Esophagus muscularis mucosa (tissue), 4 donors: ENCODE measurements at regions of chr11 and their contacts with region 1.

Region 1: DNA sequence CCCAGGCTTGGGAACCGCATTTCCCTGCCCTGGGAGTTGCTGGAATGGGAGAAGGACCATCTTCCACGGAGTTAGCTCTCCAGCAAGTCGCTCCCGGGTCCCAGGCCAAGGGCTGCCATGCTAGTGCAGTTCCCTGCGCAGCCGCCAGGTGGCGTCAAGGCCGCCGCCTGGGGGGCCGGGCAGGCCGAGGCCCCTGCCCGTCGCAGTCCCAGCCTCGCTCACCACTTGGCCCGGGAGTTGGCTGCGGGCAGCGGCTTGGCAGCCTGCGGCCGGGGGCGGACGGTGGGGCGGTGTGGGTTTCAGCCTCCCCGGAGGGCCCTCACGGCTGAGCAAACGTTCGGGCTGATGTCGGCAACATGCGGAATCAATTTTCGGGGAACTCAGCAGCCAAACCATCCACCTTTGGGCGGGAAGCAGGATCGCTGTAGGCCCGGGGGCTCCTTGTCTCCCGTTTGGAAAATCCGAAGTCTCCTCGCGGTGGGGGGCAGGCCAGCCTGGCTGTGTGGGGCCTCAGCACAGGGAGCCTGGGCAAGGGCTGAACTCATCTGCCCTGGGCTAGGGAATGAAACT is 415.1 kb downstream of the SOX6 start:
- DNase-seq: peak; percentile 55
- H3K4me3 ChIP-seq: no peak overlapping the region
- H3K27ac ChIP-seq: no peak overlapping the region
- H3K4me1 ChIP-seq: peaks cover 0 to 21% (median 12%) of the 10 kb centered on the region in 4 donors
- H3K27me3 ChIP-seq: no peaks in the 10 kb centered on the region
- CTCF ChIP-seq: peak; percentile 29 to 73 (median 59)
- EP300 ChIP-seq: no peak
- POLR2A ChIP-seq: no peak

Region 2: DNA sequence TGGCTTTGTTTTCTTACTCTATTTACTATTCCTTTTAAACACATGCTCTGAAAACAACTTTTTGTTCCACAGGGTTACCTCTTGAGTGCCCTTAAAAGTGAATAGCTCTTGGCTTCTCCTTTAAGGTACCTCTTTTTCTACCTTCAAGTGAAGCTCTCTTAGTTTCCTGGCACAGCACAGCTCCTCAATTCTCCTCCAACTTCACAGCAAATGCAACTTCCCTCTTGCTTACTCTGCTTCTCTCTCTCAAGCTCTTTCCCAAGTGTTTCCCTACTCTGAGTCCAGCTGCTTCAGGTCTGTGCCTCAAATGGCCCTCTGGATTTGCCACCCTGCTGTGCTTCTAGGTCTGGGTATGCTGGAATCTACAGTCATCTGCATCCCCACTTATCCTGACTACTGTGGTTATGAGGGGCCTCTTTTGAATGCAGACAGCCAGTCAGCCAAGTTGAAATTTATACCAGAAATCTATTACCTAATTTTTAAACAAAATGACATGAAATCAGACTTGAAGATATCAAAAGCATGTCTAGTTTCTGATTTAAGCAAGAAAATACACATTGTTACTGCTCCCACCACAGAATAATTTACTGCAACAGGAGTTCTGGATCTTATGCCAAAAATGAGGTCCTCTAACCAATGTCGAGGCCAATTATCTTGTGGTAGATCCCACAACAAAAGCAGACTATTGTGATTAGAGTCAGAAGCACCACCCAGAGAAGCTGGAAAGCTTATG is 44.0 kb after region 1 on chr11:
- intact Hi-C with region 1: no loop called
- DNase-seq: no peak
- H3K4me3 ChIP-seq: no peak overlapping the region
- H3K27ac ChIP-seq: no peak overlapping the region
- H3K4me1 ChIP-seq: peaks cover 9 to 15% (median 10%) of the 10 kb centered on the region in 4 donors
- H3K27me3 ChIP-seq: no peaks in the 10 kb centered on the region
- CTCF ChIP-seq: no peak
- EP300 ChIP-seq: no peak
- POLR2A ChIP-seq: no peak

Region 3: DNA sequence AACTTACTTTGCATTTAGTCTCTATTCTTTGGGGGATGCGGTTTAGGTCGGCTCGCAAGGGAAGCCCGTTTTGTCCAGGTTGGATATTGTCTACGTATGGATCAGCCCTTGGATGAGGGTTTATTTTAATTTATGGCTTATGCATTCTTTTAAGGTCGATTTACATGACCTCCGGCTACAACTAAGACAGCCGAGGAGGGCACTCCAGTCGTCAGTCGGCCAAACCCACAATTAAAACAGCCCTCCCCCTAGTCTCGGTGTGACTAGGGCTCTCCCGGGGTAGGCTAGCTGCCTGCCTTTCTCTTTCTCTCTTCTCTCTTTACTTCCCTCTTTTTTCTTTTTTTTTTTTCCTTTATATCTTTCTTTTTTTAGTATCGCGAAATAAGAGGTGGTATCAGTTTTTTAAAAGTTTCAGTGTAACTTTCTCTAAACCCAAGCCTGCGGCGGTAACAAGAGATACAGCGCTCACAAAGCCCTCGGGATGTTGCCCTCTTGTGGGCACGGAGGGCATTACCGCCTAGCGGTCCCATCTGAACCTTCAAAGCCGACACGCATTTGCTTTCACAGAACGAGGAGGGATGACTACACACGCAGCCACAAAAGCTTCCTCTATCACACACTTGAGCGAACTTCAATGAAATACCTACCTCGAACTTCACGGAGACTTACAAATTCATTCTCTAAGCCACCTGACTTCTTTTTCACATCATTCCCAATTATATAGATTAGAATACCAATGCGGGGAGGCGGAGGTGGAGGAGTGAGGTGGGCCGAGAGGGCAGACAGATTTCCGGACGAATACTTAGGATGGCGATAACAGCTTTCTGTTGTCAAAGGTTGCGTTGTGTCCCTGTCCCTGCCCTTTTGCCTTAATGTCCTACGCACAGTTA is 664.9 kb after region 1 on chr11:
- intact Hi-C with region 1: loop called (anchors 10 kb)
- DNase-seq: peak; percentile 97
- H3K4me3 ChIP-seq: peak overlapping the region; percentile 59 to 67 (median 66)
- H3K27ac ChIP-seq: peak overlapping the region; percentile 71 to 83 (median 75)
- H3K4me1 ChIP-seq: peaks cover 26 to 44% (median 40%) of the 10 kb centered on the region in 4 donors
- H3K27me3 ChIP-seq: peaks cover 0 to 89% (median 58%) of the 10 kb centered on the region in 4 donors
- CTCF ChIP-seq: peak; percentile 89 to 98 (median 92)
- EP300 ChIP-seq: no peak
- POLR2A ChIP-seq: no peak